ENCODE measurements at regions of chr3 and their contacts with region 1.

Region 1: GRCh38 chr3:52253314-52254304 is 8.1 kb downstream of the PPM1M start:
- DNase-seq: peak; percentile 83
- H3K4me3 Mint-ChIP-seq: peak overlapping the region; percentile 77
- H3K27ac Mint-ChIP-seq: peak overlapping the region; percentile 98
- H3K4me1 Mint-ChIP-seq: peaks cover 69% of the 10 kb centered on the region
- H3K27me3 Mint-ChIP-seq: no peaks in the 10 kb centered on the region

Region 2: GRCh38 chr3:52136513-52136912 is 117.1 kb before region 1 on chr3:
- intact Hi-C with region 1: no loop called
- DNase-seq: no peak
- H3K4me3 Mint-ChIP-seq: no peak overlapping the region
- H3K27ac Mint-ChIP-seq: no peak overlapping the region
- H3K4me1 Mint-ChIP-seq: peaks cover under 1% of the 10 kb centered on the region
- H3K27me3 Mint-ChIP-seq: no peaks in the 10 kb centered on the region

Region 3: DNA sequence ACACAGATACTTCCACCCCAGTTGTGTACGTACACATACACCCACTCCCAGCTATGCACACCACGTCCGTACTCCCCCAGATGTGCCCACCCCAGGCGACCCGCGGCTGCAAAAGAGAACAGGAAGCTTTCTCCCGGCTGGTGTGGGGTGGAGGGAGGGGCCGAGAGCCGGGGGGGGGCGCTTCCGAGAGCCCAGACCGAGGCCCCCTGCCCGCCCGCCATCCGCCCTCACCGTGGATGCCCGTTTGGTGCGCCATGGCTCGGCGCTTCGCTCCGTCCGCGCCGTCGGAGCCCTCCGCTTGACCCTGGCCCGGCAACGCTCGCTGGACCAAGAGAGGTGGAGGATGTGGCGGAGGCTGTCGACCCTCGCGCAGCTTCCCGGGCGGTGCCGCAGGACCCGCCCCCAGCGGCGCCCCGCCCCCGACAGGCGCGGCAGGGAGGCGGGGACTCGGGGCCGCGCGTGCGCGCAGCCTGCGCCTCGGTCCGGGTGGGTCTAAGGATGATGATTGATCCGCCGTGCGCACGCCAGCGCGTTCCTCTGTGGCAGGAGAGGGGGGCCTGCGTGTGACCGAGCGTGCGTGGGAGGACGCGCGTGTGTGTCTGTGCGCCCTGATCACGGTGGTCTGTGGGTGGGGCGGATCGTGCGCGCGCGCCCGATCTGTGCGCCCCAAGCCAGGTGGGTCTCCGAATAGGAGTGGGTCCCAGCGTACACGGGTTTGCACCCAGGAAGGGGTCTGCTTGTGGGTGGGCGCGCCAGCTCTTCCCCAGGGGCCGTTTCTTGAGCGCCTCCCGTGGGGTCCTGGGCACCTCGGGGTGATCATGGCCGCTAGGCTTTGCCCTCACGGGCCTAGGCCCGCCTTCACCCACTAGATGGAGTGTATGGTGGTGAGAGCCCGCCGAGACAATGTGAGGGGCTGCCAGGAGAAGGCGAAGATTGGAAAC is 14.6 kb before region 1 on chr3 and contains the start of gene TWF2:
- intact Hi-C with region 1: loop called (anchors 1 kb)
- DNase-seq: peak; percentile 83
- H3K4me3 Mint-ChIP-seq: peak within 1 kb of the TSS; percentile 96
- H3K27ac Mint-ChIP-seq: peak within 1 kb of the TSS; percentile 99
- H3K4me1 Mint-ChIP-seq: peaks cover 51% of the 10 kb centered on the region
- H3K27me3 Mint-ChIP-seq: no peaks in the 10 kb centered on the region
- total RNA-seq, gene TWF2: 89.7 and 91.1 TPM in 2 replicates

Region 4: GRCh38 chr3:52270252-52270754 is 16.7 kb after region 1 on chr3:
- intact Hi-C with region 1: loop called (anchors 1 kb)
- DNase-seq: no peak
- H3K4me3 Mint-ChIP-seq: peak overlapping the region; percentile 71
- H3K27ac Mint-ChIP-seq: peak overlapping the region; percentile 88
- H3K4me1 Mint-ChIP-seq: peaks cover 70% of the 10 kb centered on the region
- H3K27me3 Mint-ChIP-seq: no peaks in the 10 kb centered on the region